ENCODE measurements at regions of chr14 and their contacts with region 1.

Region 1: DNA sequence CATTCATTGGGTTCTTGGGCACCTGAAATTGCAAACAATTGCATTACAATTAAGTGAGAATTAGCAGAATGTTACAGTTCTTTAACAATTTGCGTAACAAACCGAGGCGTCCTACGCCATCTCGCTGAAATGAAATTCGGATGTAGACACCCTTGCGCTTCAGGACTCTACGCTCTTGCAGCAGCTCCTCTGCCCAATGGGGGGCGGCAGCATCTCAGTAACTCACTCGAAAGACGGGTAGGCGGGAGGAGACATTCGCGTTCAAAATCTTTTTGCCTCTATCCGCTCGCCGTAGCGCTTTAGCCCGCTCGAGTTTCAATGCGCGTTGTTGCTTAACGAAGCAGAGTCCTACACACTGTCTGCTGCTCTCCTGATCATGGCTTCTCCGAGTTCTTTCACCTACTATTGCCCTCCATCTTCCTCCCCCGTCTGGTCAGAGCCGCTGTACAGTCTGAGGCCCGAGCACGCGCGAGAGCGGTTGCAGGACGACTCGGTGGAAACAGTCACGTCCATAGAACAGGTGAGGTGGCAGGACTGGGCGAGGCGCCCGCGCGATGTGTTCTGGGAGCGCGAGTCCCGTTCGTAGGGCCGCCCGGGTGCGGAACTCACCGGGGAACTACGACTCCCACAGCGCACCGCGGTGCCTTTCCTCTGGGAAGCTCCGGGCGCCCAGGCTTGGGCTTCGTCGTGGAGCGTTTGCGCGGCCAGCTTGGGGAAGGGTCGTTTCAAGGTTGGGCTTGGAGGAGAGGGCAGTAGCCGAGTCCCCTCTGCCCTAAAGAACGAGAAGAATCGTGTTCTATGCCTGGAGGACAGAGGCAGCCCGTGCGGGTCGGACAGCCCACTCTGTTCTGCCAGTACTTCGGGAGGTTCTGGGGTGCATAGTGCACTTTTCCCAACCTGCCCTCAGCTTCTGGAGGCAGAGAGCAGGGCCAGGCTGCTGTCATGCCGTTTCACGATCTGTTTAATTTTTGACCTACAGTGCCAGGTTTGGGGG is at the start of gene FNTB:
- DNase-seq: peak; percentile 94
- H3K4me3 Mint-ChIP-seq: peak within 1 kb of the TSS; percentile 92
- H3K27ac Mint-ChIP-seq: peak within 1 kb of the TSS; percentile 86
- H3K4me1 Mint-ChIP-seq: peaks cover 56% of the 10 kb centered on the region
- H3K27me3 Mint-ChIP-seq: peaks cover 27% of the 10 kb centered on the region
- total RNA-seq, gene FNTB: 12.3 to 16.1 TPM

Region 2: DNA sequence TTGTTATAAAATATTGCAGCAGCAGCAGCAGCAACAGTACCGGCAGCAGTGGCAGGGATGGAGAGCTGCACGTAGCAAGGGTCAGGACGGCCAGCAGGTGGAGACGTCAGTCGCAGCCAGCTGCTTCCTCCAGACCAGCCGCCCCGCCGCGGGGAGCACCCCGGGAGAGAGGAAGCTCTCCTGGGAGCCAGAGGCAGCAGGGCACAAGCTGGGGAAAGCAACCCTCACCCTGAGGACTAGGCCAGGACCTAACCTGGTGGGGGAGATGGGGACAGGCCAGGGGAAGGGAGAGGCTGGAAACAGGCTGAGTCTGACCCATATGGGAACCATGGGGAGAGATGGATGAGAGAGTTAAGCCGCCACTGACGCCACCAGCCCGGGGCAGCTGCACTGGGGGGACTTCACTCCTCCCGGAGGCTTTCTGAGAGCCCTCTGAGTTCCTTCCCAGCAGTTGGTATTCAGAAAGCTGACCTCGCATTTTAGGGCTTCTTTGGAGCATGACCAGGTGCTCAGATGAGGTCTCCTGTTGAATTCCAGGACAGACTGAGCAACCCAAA is 163.5 kb before region 1 on chr14:
- CTCF ChIA-PET with region 1: interaction called, 13 read pairs
- POLR2A ChIA-PET with region 1: no interaction called
- DNase-seq: peak; percentile 69
- H3K4me3 Mint-ChIP-seq: no peak overlapping the region
- H3K27ac Mint-ChIP-seq: no peak overlapping the region
- H3K4me1 Mint-ChIP-seq: peaks cover 5% of the 10 kb centered on the region
- H3K27me3 Mint-ChIP-seq: peaks cover 48% of the 10 kb centered on the region

Region 3: GRCh38 chr14:65019944-65020566 is 33.2 kb after region 1 on chr14:
- CTCF ChIA-PET with region 1: interaction called, 15 read pairs
- POLR2A ChIA-PET with region 1: interaction called, 5 read pairs
- DNase-seq: no peak
- H3K4me3 Mint-ChIP-seq: no peak overlapping the region
- H3K27ac Mint-ChIP-seq: no peak overlapping the region
- H3K4me1 Mint-ChIP-seq: no peaks in the 10 kb centered on the region
- H3K27me3 Mint-ChIP-seq: no peaks in the 10 kb centered on the region

Region 4: GRCh38 chr14:65102441-65103149 is 115.7 kb after region 1 on chr14 and contains the start of gene MAX:
- CTCF ChIA-PET with region 1: interaction called, 6 read pairs
- POLR2A ChIA-PET with region 1: interaction called, 11 read pairs
- DNase-seq: peak; percentile 99
- H3K4me3 Mint-ChIP-seq: peak within 1 kb of the TSS; percentile 85
- H3K27ac Mint-ChIP-seq: peak within 1 kb of the TSS; percentile 91
- H3K4me1 Mint-ChIP-seq: peaks cover 39% of the 10 kb centered on the region
- H3K27me3 Mint-ChIP-seq: peaks cover 7% of the 10 kb centered on the region
- total RNA-seq, gene MAX: 134 to 135 TPM